ENCODE measurements at regions of chr19 and their contacts with region 1.

Region 1: GRCh38 chr19:47296036-47296435 is 13.6 kb upstream of the C5AR1 start:
- DNase-seq: peak; percentile 60 to 91
- ATAC-seq: peak; percentile 85 to 94 (median 90)
- H3K4me3 ChIP-seq: no peak overlapping the region
- H3K4me3 Mint-ChIP-seq: no peak overlapping the region
- H3K27ac ChIP-seq: no peak overlapping the region
- H3K27ac Mint-ChIP-seq: no peak overlapping the region
- H3K4me1 ChIP-seq: peaks cover 16% of the 10 kb centered on the region
- H3K4me1 Mint-ChIP-seq: peaks cover 17 to 22% of the 10 kb centered on the region in 2 donors
- H3K27me3 ChIP-seq: no peaks in the 10 kb centered on the region
- H3K27me3 Mint-ChIP-seq: no peaks in the 10 kb centered on the region
- CTCF ChIP-seq: peak; percentile 76

Region 2: GRCh38 chr19:47124937-47125668 is 170.9 kb before region 1 on chr19:
- intact Hi-C with region 1: no loop called
- DNase-seq: peak in 1 of 2 donors; percentile 84
- ATAC-seq: peak; percentile 68 to 78 (median 68)
- H3K4me3 ChIP-seq: no peak overlapping the region
- H3K4me3 Mint-ChIP-seq: no peak overlapping the region
- H3K27ac ChIP-seq: no peak overlapping the region
- H3K27ac Mint-ChIP-seq: no peak overlapping the region
- H3K4me1 ChIP-seq: peaks cover 2% of the 10 kb centered on the region
- H3K4me1 Mint-ChIP-seq: peaks cover under 1 to 2% of the 10 kb centered on the region in 2 donors
- H3K27me3 ChIP-seq: no peaks in the 10 kb centered on the region
- H3K27me3 Mint-ChIP-seq: no peaks in the 10 kb centered on the region
- CTCF ChIP-seq: peak; percentile 74

Region 3: GRCh38 chr19:47391510-47392223 is 95.6 kb after region 1 on chr19:
- intact Hi-C with region 1: loop called (anchors 1 kb)
- DNase-seq: peak; percentile 83 to 87
- ATAC-seq: peak; percentile 85 to 90 (median 89)
- H3K4me3 ChIP-seq: no peak overlapping the region
- H3K4me3 Mint-ChIP-seq: no peak overlapping the region
- H3K27ac ChIP-seq: no peak overlapping the region
- H3K27ac Mint-ChIP-seq: no peak overlapping the region
- H3K4me1 ChIP-seq: peaks cover 21% of the 10 kb centered on the region
- H3K4me1 Mint-ChIP-seq: peaks cover 15 to 17% of the 10 kb centered on the region in 2 donors
- H3K27me3 ChIP-seq: no peaks in the 10 kb centered on the region
- H3K27me3 Mint-ChIP-seq: peaks cover 19 to 23% of the 10 kb centered on the region in 2 donors
- CTCF ChIP-seq: peak; percentile 93

Region 4: GRCh38 chr19:47427241-47428176 is 131.5 kb after region 1 on chr19:
- intact Hi-C with region 1: loop called (anchors 1 kb)
- DNase-seq: peak; percentile 63 to 84
- ATAC-seq: peak; percentile 66 to 75 (median 70)
- H3K4me3 ChIP-seq: no peak overlapping the region
- H3K4me3 Mint-ChIP-seq: peak overlapping the region; percentile 43
- H3K27ac ChIP-seq: no peak overlapping the region
- H3K27ac Mint-ChIP-seq: no peak overlapping the region
- H3K4me1 ChIP-seq: peaks cover 25% of the 10 kb centered on the region
- H3K4me1 Mint-ChIP-seq: peaks cover 5 to 14% of the 10 kb centered on the region in 2 donors
- H3K27me3 ChIP-seq: peaks cover 42% of the 10 kb centered on the region
- H3K27me3 Mint-ChIP-seq: peaks cover 29 to 39% of the 10 kb centered on the region in 2 donors
- CTCF ChIP-seq: peak; percentile 88

Region 5: GRCh38 chr19:47697863-47698609 is 402.0 kb after region 1 on chr19:
- intact Hi-C with region 1: loop called (anchors 5 kb)
- DNase-seq: peak; percentile 43 to 76
- ATAC-seq: peak; percentile 63 to 86 (median 78)
- H3K4me3 ChIP-seq: no peak overlapping the region
- H3K4me3 Mint-ChIP-seq: no peak overlapping the region
- H3K27ac ChIP-seq: no peak overlapping the region
- H3K27ac Mint-ChIP-seq: no peak overlapping the region
- H3K4me1 ChIP-seq: no peaks in the 10 kb centered on the region
- H3K4me1 Mint-ChIP-seq: peaks cover 0 to 6% of the 10 kb centered on the region in 2 donors
- H3K27me3 ChIP-seq: no peaks in the 10 kb centered on the region
- H3K27me3 Mint-ChIP-seq: no peaks in the 10 kb centered on the region
- CTCF ChIP-seq: peak; percentile 74

Measured in natural killer cell (primary cell).